Activated CD8-positive, alpha-beta T cell treated with anti-CD3 and anti-CD28 coated beads for 36 hours (primary cell): ENCODE measurements at regions of chr2 and their contacts with region 1.

Region 1: DNA sequence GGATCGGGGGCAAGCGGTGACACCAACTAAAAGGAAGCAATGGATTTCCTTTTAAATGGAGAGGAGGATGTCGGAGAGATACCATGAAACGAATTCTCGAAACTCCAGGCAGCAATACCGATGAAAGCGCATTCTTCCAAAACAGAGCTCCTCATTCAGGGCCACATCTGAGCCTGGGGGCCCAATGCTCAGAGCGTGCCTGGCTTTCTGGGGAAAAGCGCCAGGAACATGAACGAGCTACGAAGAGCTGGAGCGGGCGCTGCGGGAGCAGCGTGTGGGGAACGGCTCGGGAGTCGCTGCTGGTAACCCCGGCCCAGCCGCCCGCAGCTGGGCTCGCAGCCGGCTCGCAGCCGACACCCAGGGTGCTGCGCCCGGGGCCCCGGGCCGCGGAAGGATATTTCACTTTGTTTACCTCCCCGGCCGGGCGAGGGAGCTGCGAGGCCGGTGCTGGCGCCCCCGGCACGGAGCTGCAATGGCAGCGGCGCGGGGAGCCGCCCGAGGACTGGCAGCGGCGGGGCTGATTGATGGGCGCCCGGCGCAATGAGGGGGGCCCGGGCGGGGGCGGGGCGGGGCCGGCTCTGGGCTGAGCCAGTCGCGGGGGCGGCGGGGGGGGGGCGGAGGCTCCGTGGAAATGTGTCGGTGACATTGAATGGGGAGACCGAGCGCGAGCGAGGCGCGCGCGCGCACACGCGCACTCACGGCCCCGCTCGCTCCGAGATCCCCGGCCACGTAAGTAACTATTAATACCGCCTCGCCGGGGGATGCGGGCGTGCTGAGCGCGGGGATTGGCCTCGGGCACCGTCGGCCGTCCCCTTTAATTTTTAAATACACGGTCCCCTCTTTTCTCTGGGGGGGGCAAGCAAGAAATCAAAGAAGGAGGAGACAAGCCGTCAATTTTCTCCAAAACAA is at the start of gene TRIB2:
- DNase-seq: peak; percentile 87
- ATAC-seq: peak; percentile 83
- H3K4me3 Mint-ChIP-seq: peak within 1 kb of the TSS; percentile 96
- H3K27ac Mint-ChIP-seq: peak within 1 kb of the TSS; percentile 89
- H3K4me1 Mint-ChIP-seq: peaks cover 38% of the 10 kb centered on the region
- H3K27me3 Mint-ChIP-seq: no peaks in the 10 kb centered on the region
- CTCF ChIP-seq: peak; percentile 22
- total RNA-seq, gene TRIB2: 9.2 to 11.0 TPM

Region 2: GRCh38 chr2:12293874-12294273 is 422.7 kb before region 1 on chr2:
- CTCF ChIA-PET with region 1: interaction called, 3 read pairs
- POLR2A ChIA-PET with region 1: no interaction called
- intact Hi-C with region 1: loop called (anchors 5 kb)
- DNase-seq: peak; percentile 15
- ATAC-seq: peak; percentile 93
- H3K4me3 Mint-ChIP-seq: no peak overlapping the region
- H3K27ac Mint-ChIP-seq: peak overlapping the region; percentile 53
- H3K4me1 Mint-ChIP-seq: peaks cover 41% of the 10 kb centered on the region
- H3K27me3 Mint-ChIP-seq: peaks cover 2% of the 10 kb centered on the region
- CTCF ChIP-seq: no peak

Region 3: GRCh38 chr2:12501469-12502158 is 214.9 kb before region 1 on chr2:
- CTCF ChIA-PET with region 1: interaction called, 6 read pairs
- POLR2A ChIA-PET with region 1: no interaction called
- intact Hi-C with region 1: loop called (anchors 5 kb)
- DNase-seq: peak; percentile 92
- ATAC-seq: peak; percentile 75
- H3K4me3 Mint-ChIP-seq: no peak overlapping the region
- H3K27ac Mint-ChIP-seq: peak overlapping the region; percentile 75
- H3K4me1 Mint-ChIP-seq: peaks cover 91% of the 10 kb centered on the region
- H3K27me3 Mint-ChIP-seq: no peaks in the 10 kb centered on the region
- CTCF ChIP-seq: no peak

Region 4: GRCh38 chr2:12613137-12613835 is 103.2 kb before region 1 on chr2:
- CTCF ChIA-PET with region 1: no interaction called
- POLR2A ChIA-PET with region 1: no interaction called
- intact Hi-C with region 1: no loop called
- DNase-seq: no peak
- ATAC-seq: no peak
- H3K4me3 Mint-ChIP-seq: no peak overlapping the region
- H3K27ac Mint-ChIP-seq: no peak overlapping the region
- H3K4me1 Mint-ChIP-seq: peaks cover 15% of the 10 kb centered on the region
- H3K27me3 Mint-ChIP-seq: no peaks in the 10 kb centered on the region
- CTCF ChIP-seq: no peak

Region 5: DNA sequence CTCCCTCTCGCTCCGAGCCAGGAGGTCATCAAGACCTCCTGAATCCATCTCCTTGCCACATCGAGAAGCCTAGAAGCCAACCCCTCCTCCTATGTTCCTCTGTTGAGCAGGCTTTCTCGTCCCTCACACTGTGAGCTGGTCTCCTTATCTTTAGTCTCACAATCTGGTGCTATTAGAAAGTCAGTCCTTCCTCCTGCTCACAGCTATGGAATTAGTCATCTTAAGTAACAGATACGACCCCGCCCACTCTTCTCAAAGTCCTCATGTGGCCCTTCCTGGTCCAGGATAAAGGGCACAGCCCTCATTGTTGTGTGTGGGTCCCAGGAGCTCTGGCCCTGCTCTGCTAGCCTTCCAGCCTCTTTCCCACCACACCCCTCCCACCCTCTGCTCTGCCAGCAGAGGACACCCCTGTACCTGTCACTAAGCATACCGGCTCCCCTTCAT is 41.2 kb before region 1 on chr2:
- CTCF ChIA-PET with region 1: interaction called, 12 read pairs
- POLR2A ChIA-PET with region 1: no interaction called
- intact Hi-C with region 1: no loop called
- DNase-seq: no peak
- ATAC-seq: no peak
- H3K4me3 Mint-ChIP-seq: no peak overlapping the region
- H3K27ac Mint-ChIP-seq: no peak overlapping the region
- H3K4me1 Mint-ChIP-seq: no peaks in the 10 kb centered on the region
- H3K27me3 Mint-ChIP-seq: no peaks in the 10 kb centered on the region
- CTCF ChIP-seq: no peak

Region 6: DNA sequence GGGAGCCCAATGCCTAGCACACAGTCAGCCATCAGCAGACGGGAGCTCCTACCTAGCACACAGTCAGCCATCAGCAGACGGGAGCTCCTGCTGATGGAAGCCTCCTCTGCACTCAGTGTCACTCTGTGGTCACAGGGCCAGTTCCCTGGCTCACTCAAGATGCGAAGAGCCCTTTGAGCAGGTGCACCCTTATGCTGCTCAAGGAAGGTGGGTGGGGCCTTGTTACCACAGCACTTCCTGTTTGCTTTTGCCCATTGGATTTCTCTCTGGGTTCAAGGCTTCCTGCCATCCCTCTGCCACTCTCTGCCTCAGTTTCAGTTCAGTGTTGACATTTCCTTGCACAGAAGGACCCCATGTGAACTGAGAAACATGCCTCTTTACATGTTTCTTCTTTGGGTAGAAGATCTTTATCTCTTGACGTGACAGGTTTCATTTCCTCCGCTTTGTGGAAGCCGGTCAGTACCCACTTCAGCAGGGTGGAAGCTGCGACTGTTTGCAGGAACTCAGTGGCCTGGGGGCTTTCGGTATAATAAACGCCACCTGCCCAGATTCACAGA is 11.8 kb after region 1 on chr2:
- CTCF ChIA-PET with region 1: interaction called, 28 read pairs
- POLR2A ChIA-PET with region 1: interaction called, 3 read pairs
- intact Hi-C with region 1: no loop called
- DNase-seq: peak; percentile 86
- ATAC-seq: peak; percentile 92
- H3K4me3 Mint-ChIP-seq: peak overlapping the region; percentile 43
- H3K27ac Mint-ChIP-seq: peak overlapping the region; percentile 51
- H3K4me1 Mint-ChIP-seq: peaks cover 63% of the 10 kb centered on the region
- H3K27me3 Mint-ChIP-seq: no peaks in the 10 kb centered on the region
- CTCF ChIP-seq: no peak

Region 7: GRCh38 chr2:12769492-12770105 is 53.1 kb after region 1 on chr2:
- CTCF ChIA-PET with region 1: no interaction called
- POLR2A ChIA-PET with region 1: no interaction called
- intact Hi-C with region 1: no loop called
- DNase-seq: no peak
- ATAC-seq: no peak
- H3K4me3 Mint-ChIP-seq: no peak overlapping the region
- H3K27ac Mint-ChIP-seq: no peak overlapping the region
- H3K4me1 Mint-ChIP-seq: no peaks in the 10 kb centered on the region
- H3K27me3 Mint-ChIP-seq: peaks cover 27% of the 10 kb centered on the region
- CTCF ChIP-seq: no peak

Region 8: DNA sequence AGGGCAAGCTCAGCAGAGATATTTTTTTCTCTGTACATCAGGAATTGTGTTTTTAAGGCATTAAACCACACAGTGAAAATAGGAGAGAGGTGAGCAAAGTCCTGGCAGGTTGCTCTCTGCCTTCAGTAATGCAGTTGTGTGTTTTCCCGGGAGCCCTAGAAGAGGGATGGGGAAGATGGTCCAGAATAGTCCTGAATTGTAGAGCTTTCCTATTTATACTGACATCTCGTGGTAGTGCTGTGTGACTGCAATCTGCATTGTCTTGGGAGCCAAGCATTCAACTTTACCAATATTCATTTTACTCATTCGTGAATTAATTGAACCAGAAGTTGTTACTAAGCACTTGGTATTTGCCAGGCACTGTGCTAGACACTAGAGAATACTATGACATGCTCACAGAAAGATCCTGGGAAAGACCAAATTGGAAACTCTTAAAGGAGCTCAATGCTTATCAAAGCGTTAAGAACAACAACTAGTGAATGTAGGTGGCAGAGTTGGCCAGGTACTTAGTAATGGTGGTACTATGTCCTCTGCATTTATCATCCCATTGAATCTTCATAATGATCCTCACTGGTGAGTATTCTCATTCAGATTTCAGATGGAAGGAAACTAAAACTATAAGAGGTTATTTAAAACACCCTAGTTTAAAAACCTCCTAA is 214.8 kb after region 1 on chr2:
- CTCF ChIA-PET with region 1: interaction called, 26 read pairs
- POLR2A ChIA-PET with region 1: interaction called, 3 read pairs
- intact Hi-C with region 1: loop called (anchors 5 kb)
- DNase-seq: no peak
- ATAC-seq: peak; percentile 56
- H3K4me3 Mint-ChIP-seq: no peak overlapping the region
- H3K27ac Mint-ChIP-seq: no peak overlapping the region
- H3K4me1 Mint-ChIP-seq: peaks cover 4% of the 10 kb centered on the region
- H3K27me3 Mint-ChIP-seq: peaks cover 11% of the 10 kb centered on the region
- CTCF ChIP-seq: peak; percentile 78